AG04450 (cell line): ENCODE measurements at regions of chr1 and their contacts with region 1.

Region 1: DNA sequence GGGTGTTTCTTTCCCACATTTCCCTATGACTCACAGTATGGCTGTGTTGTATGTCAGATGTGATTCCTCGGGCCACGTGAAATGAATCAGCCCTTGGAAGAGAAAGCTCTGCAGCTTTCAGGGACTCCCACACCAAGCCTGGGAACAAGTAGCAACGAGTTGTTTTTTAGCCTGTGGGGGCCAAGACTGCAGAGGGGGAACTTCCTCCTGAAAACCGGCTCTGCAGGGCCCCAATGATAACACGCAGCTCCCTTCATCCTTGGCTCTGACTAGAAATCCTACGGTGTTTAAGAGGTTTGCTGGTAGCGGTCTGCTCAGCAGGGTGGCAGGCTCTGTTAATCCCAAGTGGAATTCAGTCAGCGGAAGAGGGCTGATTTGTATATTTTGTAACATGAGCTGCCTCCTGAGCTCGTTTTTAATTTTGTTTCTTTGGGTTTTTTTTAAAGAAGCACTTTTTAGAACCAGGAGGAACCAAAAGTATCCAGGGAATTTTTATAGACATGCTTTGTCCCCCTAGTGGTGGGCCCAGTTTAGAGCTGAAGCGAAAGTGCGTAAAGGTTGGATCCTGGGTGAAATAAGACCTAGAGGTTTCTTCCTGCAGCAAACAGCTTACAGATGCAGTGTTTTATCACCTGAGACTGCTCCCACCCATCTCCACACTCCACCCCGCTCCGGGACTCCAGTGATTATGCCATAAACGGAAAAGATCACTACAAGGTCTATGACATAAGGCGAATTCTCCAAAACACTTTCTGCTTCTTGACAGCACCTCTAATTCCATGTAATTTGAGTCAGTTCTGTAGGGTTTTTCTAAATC is 48.8 kb downstream of the LAMC2 start:
- DNase-seq: peak; percentile 83
- H3K4me3 ChIP-seq: peak overlapping the region; percentile 50
- H3K27ac ChIP-seq: peak overlapping the region; percentile 93
- H3K27me3 ChIP-seq: no peaks in the 10 kb centered on the region
- CTCF ChIP-seq: peak; percentile 88

Region 2: GRCh38 chr1:182962554-182963115 is 272.2 kb before region 1 on chr1:
- CTCF ChIA-PET with region 1: interaction called, 35 read pairs
- POLR2A ChIA-PET with region 1: interaction called, 3 read pairs
- DNase-seq: peak; percentile 76
- H3K4me3 ChIP-seq: peak overlapping the region; percentile 38; the same call in 1 of the 2 replicates
- H3K27ac ChIP-seq: no peak overlapping the region
- H3K27me3 ChIP-seq: no peaks in the 10 kb centered on the region
- CTCF ChIP-seq: peak; percentile 95

Region 3: GRCh38 chr1:183178490-183178889 is 56.4 kb before region 1 on chr1:
- CTCF ChIA-PET with region 1: interaction called, 15 read pairs
- POLR2A ChIA-PET with region 1: interaction called, 4 read pairs
- DNase-seq: no peak
- H3K4me3 ChIP-seq: no peak overlapping the region
- H3K27ac ChIP-seq: no peak overlapping the region
- H3K27me3 ChIP-seq: no peaks in the 10 kb centered on the region
- CTCF ChIP-seq: no peak

Region 4: DNA sequence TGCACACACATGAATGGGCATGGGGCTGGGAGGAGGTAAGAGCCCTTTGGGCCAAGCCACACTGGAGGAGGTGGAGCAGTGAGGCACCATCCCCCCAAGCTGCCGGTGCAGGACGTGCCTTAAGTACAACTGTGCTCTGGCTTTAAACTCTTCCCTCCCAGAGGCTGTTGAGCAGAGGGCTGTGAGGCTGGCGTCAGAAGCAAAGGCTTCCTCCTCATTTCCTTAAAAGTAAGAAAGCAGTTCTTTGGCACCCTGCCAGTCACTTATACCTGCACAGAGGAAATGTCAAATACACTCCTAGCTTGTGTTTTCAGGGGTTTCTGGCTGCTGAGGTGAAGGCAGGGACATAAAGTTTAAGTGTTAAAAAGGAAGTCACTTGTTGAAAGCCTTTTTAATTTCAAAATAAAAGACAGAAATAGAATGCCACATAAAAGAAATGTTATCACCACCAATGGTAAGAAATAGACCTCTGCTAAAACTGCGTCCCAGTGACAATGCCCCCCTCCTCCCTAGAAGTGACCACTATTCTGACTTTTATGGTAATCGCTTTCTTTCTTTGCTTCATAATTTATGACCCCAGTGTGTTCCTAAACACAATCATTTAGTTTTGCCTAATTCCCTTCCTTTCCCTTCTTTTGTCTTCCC is 15.8 kb before region 1 on chr1:
- CTCF ChIA-PET with region 1: interaction called, 26 read pairs
- POLR2A ChIA-PET with region 1: no interaction called
- DNase-seq: no peak
- H3K4me3 ChIP-seq: no peak overlapping the region
- H3K27ac ChIP-seq: no peak overlapping the region
- H3K27me3 ChIP-seq: no peaks in the 10 kb centered on the region
- CTCF ChIP-seq: no peak

Region 5: DNA sequence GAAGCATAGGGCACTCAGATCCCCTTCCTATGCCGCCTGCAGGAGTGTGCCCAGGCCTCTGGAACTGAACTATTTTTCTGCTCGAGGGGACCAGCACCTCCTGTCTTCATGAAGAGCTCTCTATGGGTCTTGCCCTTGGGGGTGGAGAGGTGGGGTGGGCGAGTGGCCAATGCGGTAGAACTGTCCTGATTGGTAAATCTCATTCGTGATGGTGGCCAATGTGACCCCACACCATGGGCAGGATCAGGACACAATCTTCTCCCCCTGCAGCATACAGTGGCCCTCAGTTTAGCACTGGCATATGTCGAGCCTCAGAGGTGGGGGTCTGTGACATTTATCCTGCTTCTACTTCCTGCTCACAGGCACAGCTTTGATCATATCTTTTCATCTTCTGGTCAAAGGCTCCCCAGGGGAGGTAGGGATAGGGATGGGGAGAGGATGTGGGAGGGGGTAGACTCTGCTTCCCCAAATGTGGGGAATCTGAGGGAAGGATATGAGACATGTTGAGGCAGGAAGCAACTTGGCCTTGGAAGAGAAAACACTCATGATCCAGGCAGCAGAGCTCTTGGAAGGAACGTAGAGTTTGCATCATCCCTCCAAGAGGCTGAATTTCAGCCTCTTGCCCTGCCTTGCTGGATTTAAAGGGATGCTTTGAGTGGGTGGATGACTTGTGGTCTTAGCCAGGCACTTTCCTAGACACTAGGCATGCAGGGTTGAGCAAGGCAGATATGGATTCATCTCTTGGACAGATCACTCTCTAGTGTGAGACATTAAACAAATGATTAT is 33.0 kb after region 1 on chr1:
- CTCF ChIA-PET with region 1: interaction called, 14 read pairs
- POLR2A ChIA-PET with region 1: interaction called, 6 read pairs
- DNase-seq: peak; percentile 84
- H3K4me3 ChIP-seq: no peak overlapping the region
- H3K27ac ChIP-seq: peak overlapping the region; percentile 96
- H3K27me3 ChIP-seq: no peaks in the 10 kb centered on the region
- CTCF ChIP-seq: no peak